ENCODE measurements at regions of chr13 and their contacts with region 1.

Region 1: DNA sequence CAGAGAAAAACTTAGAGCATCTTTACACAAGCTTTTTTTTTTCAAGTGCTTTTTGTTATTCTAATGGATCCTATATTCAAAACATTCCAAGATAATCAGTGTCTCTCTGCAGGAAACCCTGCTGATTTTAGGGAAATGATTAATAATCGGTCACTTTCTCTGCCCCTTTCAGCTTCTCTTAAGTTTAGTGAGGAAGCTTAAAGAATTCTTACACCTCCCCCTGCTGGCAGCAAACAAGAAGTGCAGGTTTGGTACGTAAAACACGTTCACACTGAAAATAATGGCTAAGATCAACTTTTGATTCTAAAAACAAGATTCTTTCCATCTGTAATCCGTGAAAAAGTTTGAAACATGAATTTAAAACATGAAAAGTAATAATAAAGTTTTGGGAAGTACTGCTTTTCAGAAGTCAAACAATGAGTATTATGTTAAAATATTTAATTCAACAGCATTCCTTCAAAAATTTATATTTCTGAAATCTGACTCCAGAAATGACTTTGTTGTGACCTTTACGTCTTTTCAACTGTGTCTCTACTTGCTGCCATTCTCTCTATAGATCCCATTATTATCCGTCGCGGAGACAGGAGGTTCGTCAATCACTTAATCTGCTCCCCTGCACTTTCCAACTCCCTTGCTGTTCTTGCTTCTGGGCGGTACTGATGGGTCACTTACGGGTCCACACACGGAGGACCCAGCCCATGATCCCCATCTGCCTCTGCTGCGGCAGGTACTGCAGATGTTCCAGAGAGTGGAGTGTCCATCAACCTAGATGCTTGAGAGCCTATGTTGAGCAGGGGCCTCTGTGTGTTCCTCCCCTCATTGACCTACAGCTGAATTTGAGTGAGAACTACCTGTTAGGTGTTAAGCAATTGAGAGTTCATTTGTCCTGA is 203.1 kb upstream of the EDNRB start:
- DNase-seq: peak; percentile 82
- H3K4me3 ChIP-seq: no peak overlapping the region
- H3K27ac ChIP-seq: no peak overlapping the region
- H3K4me1 ChIP-seq: peaks cover 8% of the 10 kb centered on the region
- H3K27me3 ChIP-seq: peaks cover 0 to under 1% of the 10 kb centered on the region in 2 experiments
- CTCF ChIP-seq: peak; percentile 62 to 68
- POLR2A ChIP-seq: no peak

Region 2: DNA sequence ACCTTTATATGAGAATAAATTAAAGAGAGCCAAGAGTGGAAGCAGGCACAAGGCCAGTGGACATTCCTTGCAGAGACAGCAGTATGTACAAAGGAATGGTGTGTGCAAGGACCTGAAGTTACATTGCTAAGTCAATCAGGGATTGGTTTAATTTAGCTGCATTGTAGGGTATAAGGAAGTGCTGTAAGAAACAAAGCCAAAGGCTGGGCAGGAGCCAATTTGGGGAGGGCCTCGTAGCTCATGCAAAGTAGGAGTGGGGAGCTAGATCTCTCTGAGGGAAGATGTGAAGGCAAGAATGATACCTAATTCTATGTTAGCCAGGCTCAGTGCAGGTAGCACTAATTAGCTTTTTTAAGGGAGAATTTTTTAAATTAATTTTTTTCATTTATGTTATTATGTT is 347.5 kb before region 1 on chr13:
- CTCF ChIA-PET with region 1: interaction called, 70 read pairs
- POLR2A ChIA-PET with region 1: no interaction called
- dilution Hi-C with region 1: no loop called
- intact Hi-C with region 1: loop called (anchors 1 kb)
- DNase-seq: no peak
- H3K4me3 ChIP-seq: no peak overlapping the region
- H3K27ac ChIP-seq: no peak overlapping the region
- H3K4me1 ChIP-seq: no peaks in the 10 kb centered on the region
- H3K27me3 ChIP-seq: no peaks in the 10 kb centered on the region
- CTCF ChIP-seq: no peak
- POLR2A ChIP-seq: no peak

Region 3: GRCh38 chr13:77800219-77800618 is 321.5 kb before region 1 on chr13:
- CTCF ChIA-PET with region 1: interaction called, 12 read pairs
- POLR2A ChIA-PET with region 1: no interaction called
- dilution Hi-C with region 1: no loop called
- intact Hi-C with region 1: no loop called
- DNase-seq: no peak
- H3K4me3 ChIP-seq: no peak overlapping the region
- H3K27ac ChIP-seq: no peak overlapping the region
- H3K4me1 ChIP-seq: no peaks in the 10 kb centered on the region
- H3K27me3 ChIP-seq: no peaks in the 10 kb centered on the region
- CTCF ChIP-seq: no peak
- POLR2A ChIP-seq: no peak

Region 4: GRCh38 chr13:77898097-77898496 is 223.6 kb before region 1 on chr13:
- CTCF ChIA-PET with region 1: interaction called, 22 read pairs
- POLR2A ChIA-PET with region 1: no interaction called
- dilution Hi-C with region 1: no loop called
- intact Hi-C with region 1: loop called (anchors 1 kb)
- DNase-seq: peak; percentile 91
- H3K4me3 ChIP-seq: peak overlapping the region in 2 of 3 experiments; percentile 28 to 58
- H3K27ac ChIP-seq: peak overlapping the region; percentile 92
- H3K4me1 ChIP-seq: peaks cover 27% of the 10 kb centered on the region
- H3K27me3 ChIP-seq: no peaks in the 10 kb centered on the region
- CTCF ChIP-seq: no peak
- POLR2A ChIP-seq: no peak

Region 5: GRCh38 chr13:77928909-77929308 is 192.8 kb before region 1 on chr13:
- CTCF ChIA-PET with region 1: interaction called, 13 read pairs
- POLR2A ChIA-PET with region 1: no interaction called
- dilution Hi-C with region 1: no loop called
- intact Hi-C with region 1: no loop called
- DNase-seq: peak; percentile 80
- H3K4me3 ChIP-seq: no peak overlapping the region
- H3K27ac ChIP-seq: no peak overlapping the region
- H3K4me1 ChIP-seq: peaks cover 12% of the 10 kb centered on the region
- H3K27me3 ChIP-seq: no peaks in the 10 kb centered on the region
- CTCF ChIP-seq: no peak
- POLR2A ChIP-seq: no peak

Region 6: GRCh38 chr13:78032132-78032531 is 89.6 kb before region 1 on chr13:
- CTCF ChIA-PET with region 1: interaction called, 17 read pairs
- POLR2A ChIA-PET with region 1: no interaction called
- dilution Hi-C with region 1: no loop called
- intact Hi-C with region 1: no loop called
- DNase-seq: peak; percentile 96
- H3K4me3 ChIP-seq: no peak overlapping the region
- H3K27ac ChIP-seq: peak overlapping the region; percentile 66
- H3K4me1 ChIP-seq: peaks cover 21% of the 10 kb centered on the region
- H3K27me3 ChIP-seq: no peaks in the 10 kb centered on the region
- CTCF ChIP-seq: no peak
- POLR2A ChIP-seq: no peak